Activated naive CD4-positive, alpha-beta T cell treated with anti-CD3 and anti-CD28 coated beads for 36 hours (primary cell): ENCODE measurements at regions of chr18 and their contacts with region 1.

Region 1: DNA sequence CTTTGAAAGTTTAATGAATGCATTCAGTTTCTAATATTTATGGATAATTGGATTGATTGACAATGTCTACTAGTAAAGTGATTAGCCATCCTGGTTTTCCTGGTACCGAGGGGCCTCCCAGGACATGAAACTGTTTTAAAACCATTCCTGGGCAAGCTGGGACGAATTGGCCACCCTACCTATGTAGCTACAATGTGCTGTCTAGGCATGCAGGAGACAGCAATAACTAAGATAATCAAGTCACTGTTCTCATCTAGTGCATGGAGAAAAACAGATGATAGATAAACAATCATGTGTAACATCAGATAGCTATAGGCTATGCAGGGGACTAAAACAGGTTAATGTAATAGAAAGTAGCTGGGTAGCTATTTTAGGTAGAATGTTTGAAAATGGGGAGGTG is 67.1 kb downstream of the PMAIP1 start:
- DNase-seq: no peak
- H3K4me3 Mint-ChIP-seq: no peak overlapping the region
- H3K27ac Mint-ChIP-seq: no peak overlapping the region
- H3K4me1 Mint-ChIP-seq: peaks cover 7% of the 10 kb centered on the region
- H3K27me3 Mint-ChIP-seq: peaks cover 19% of the 10 kb centered on the region

Region 2: GRCh38 chr18:59715966-59716369 is 250.9 kb before region 1 on chr18:
- CTCF ChIA-PET with region 1: no interaction called
- intact Hi-C with region 1: no loop called
- DNase-seq: no peak
- H3K4me3 Mint-ChIP-seq: no peak overlapping the region
- H3K27ac Mint-ChIP-seq: no peak overlapping the region
- H3K4me1 Mint-ChIP-seq: no peaks in the 10 kb centered on the region
- H3K27me3 Mint-ChIP-seq: peaks cover 2% of the 10 kb centered on the region

Region 3: GRCh38 chr18:59988098-59988706 is 21.3 kb after region 1 on chr18:
- CTCF ChIA-PET with region 1: interaction called, 20 read pairs
- intact Hi-C with region 1: no loop called
- DNase-seq: peak; percentile 74
- H3K4me3 Mint-ChIP-seq: no peak overlapping the region
- H3K27ac Mint-ChIP-seq: no peak overlapping the region
- H3K4me1 Mint-ChIP-seq: no peaks in the 10 kb centered on the region
- H3K27me3 Mint-ChIP-seq: peaks cover 18% of the 10 kb centered on the region